ENCODE measurements at regions of chr15 and their contacts with region 1.

Region 1: GRCh38 chr15:85330901-85331588 is 49.4 kb upstream of the AKAP13 start:
- DNase-seq: peak; percentile 90
- H3K4me3 Mint-ChIP-seq: peak overlapping the region; percentile 82
- H3K27ac Mint-ChIP-seq: peak overlapping the region; percentile 77
- H3K4me1 Mint-ChIP-seq: peaks cover 38% of the 10 kb centered on the region
- H3K27me3 Mint-ChIP-seq: no peaks in the 10 kb centered on the region

Region 2: GRCh38 chr15:85282504-85283115 is 48.4 kb before region 1 on chr15:
- CTCF ChIA-PET with region 1: no interaction called
- POLR2A ChIA-PET with region 1: no interaction called
- intact Hi-C with region 1: no loop called
- DNase-seq: no peak
- H3K4me3 Mint-ChIP-seq: no peak overlapping the region
- H3K27ac Mint-ChIP-seq: no peak overlapping the region
- H3K4me1 Mint-ChIP-seq: peaks cover 5% of the 10 kb centered on the region
- H3K27me3 Mint-ChIP-seq: no peaks in the 10 kb centered on the region

Region 3: GRCh38 chr15:85296615-85297402 is 34.2 kb before region 1 on chr15:
- CTCF ChIA-PET with region 1: interaction called, 28 read pairs
- POLR2A ChIA-PET with region 1: no interaction called
- intact Hi-C with region 1: loop called (anchors 2 kb)
- DNase-seq: peak; percentile 77
- H3K4me3 Mint-ChIP-seq: peak overlapping the region; percentile 52
- H3K27ac Mint-ChIP-seq: no peak overlapping the region
- H3K4me1 Mint-ChIP-seq: peaks cover 12% of the 10 kb centered on the region
- H3K27me3 Mint-ChIP-seq: no peaks in the 10 kb centered on the region

Region 4: GRCh38 chr15:85354461-85354860 is 23.4 kb after region 1 on chr15:
- CTCF ChIA-PET with region 1: interaction called, 11 read pairs
- POLR2A ChIA-PET with region 1: interaction called, 3 read pairs
- intact Hi-C with region 1: loop called (anchors 1 kb)
- DNase-seq: no peak
- H3K4me3 Mint-ChIP-seq: no peak overlapping the region
- H3K27ac Mint-ChIP-seq: no peak overlapping the region
- H3K4me1 Mint-ChIP-seq: peaks cover 15% of the 10 kb centered on the region
- H3K27me3 Mint-ChIP-seq: no peaks in the 10 kb centered on the region

Region 5: GRCh38 chr15:85407804-85408746 is 77.0 kb after region 1 on chr15:
- CTCF ChIA-PET with region 1: interaction called, 65 read pairs
- POLR2A ChIA-PET with region 1: interaction called, 8 read pairs
- intact Hi-C with region 1: loop called (anchors 1 kb)
- DNase-seq: peak; percentile 64
- H3K4me3 Mint-ChIP-seq: peak overlapping the region; percentile 53
- H3K27ac Mint-ChIP-seq: peak overlapping the region; percentile 91
- H3K4me1 Mint-ChIP-seq: peaks cover 81% of the 10 kb centered on the region
- H3K27me3 Mint-ChIP-seq: no peaks in the 10 kb centered on the region

Region 6: GRCh38 chr15:85485956-85486567 is 155.0 kb after region 1 on chr15:
- CTCF ChIA-PET with region 1: interaction called, 13 read pairs
- POLR2A ChIA-PET with region 1: no interaction called
- intact Hi-C with region 1: no loop called
- DNase-seq: peak; percentile 41
- H3K4me3 Mint-ChIP-seq: no peak overlapping the region
- H3K27ac Mint-ChIP-seq: peak overlapping the region; percentile 32
- H3K4me1 Mint-ChIP-seq: peaks cover 69% of the 10 kb centered on the region
- H3K27me3 Mint-ChIP-seq: no peaks in the 10 kb centered on the region